ENCODE measurements at regions of chr7 and their contacts with region 1.

Region 1: GRCh38 chr7:140003913-140004382 is 58.8 kb downstream of the PARP12 start:
- DNase-seq: peak in 1 of 3 donors; percentile 71
- ATAC-seq: peak; percentile 48
- H3K4me3 ChIP-seq: no peak overlapping the region
- H3K4me1 ChIP-seq: no peaks in the 10 kb centered on the region
- CTCF ChIP-seq: no peak

Region 2: GRCh38 chr7:139618482-139619366 is 385.2 kb before region 1 on chr7:
- intact Hi-C with region 1: loop called in 1 of 2 experiments (anchors 10 kb)
- DNase-seq: peak in 2 of 3 donors; percentile 39 to 50
- ATAC-seq: peak; percentile 37
- H3K4me3 ChIP-seq: no peak overlapping the region
- H3K4me1 ChIP-seq: no peaks in the 10 kb centered on the region
- CTCF ChIP-seq: no peak

Region 3: GRCh38 chr7:139777948-139778841 is 225.8 kb before region 1 on chr7 and contains the start of gene HIPK2:
- intact Hi-C with region 1: loop called in 1 of 2 experiments (anchors 10 kb)
- DNase-seq: peak; percentile 82 to 88 (median 85)
- ATAC-seq: peak; percentile 85
- H3K4me3 ChIP-seq: peak within 1 kb of the TSS; percentile 66
- H3K4me1 ChIP-seq: peaks cover 14% of the 10 kb centered on the region
- CTCF ChIP-seq: no peak
- total RNA-seq, gene HIPK2: 29.9 to 63.6 (median 39.9) TPM

Region 4: GRCh38 chr7:140121326-140121725 is 117.4 kb after region 1 on chr7:
- intact Hi-C with region 1: no loop called
- DNase-seq: no peak
- ATAC-seq: no peak
- H3K4me3 ChIP-seq: no peak overlapping the region
- H3K4me1 ChIP-seq: no peaks in the 10 kb centered on the region
- CTCF ChIP-seq: no peak

Region 5: GRCh38 chr7:140249036-140249806 is 245.3 kb after region 1 on chr7:
- intact Hi-C with region 1: no loop called
- DNase-seq: no peak
- ATAC-seq: peak; percentile 63
- H3K4me3 ChIP-seq: no peak overlapping the region
- H3K4me1 ChIP-seq: peaks cover 5% of the 10 kb centered on the region
- CTCF ChIP-seq: no peak